Motor neuron (in vitro differentiated cells): ENCODE measurements at regions of chr16 and their contacts with region 1.

Region 1: DNA sequence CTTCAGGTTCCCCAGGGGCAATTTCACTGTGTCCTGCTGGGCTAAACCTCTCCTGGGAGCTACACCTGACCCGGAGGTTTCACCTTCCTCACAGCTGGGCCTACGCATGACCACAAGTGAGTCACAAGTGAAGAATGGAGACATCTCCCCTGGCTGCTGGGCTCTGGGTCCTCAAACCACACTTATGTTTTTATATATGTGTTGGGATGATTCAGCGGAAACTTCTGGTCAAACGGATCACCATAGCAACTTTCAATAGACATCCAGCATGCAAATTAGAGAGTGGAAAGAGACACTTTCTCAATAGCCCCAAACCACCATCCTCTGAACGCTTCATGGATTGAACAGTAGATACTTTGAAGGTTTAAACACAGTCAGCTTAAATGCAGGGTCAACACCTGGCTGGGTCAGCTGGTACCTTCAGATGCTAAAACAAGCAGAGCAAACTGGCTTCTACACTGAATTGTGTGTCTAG is 28.0 kb upstream of the MAF start:
- ATAC-seq: no peak
- H3K4me3 ChIP-seq: no peak overlapping the region
- H3K27ac ChIP-seq: no peak overlapping the region
- H3K4me1 ChIP-seq: no peaks in the 10 kb centered on the region

Region 2: GRCh38 chr16:79792664-79793351 is 164.3 kb after region 1 on chr16:
- in situ Hi-C with region 1: no loop called
- ATAC-seq: no peak
- H3K4me3 ChIP-seq: no peak overlapping the region
- H3K27ac ChIP-seq: no peak overlapping the region
- H3K4me1 ChIP-seq: no peaks in the 10 kb centered on the region

Region 3: DNA sequence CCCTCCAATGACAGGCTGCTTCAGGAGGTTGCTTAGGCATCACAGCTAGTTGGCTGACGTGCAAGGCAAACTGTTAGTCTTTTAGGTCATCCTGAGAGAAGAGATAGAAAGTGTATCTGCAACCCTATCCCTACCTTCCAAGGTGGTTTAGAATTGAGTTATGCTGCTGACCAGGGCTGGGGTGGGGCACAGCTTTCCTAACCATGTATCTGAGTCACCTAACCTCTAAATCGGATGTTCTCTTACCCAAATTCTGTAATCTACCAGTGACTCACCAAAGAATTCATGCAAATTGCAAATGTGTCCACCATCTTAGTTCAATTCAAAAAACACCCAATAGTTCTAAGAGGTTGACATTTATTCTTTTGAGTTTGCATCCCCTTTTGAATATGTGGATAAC is 805.1 kb after region 1 on chr16:
- in situ Hi-C with region 1: no loop called
- ATAC-seq: peak in 3 of 8 experiments; percentile 50 to 99 (median 95)
- H3K4me3 ChIP-seq: no peak overlapping the region
- H3K27ac ChIP-seq: no peak overlapping the region
- H3K4me1 ChIP-seq: no peaks in the 10 kb centered on the region

Region 4: DNA sequence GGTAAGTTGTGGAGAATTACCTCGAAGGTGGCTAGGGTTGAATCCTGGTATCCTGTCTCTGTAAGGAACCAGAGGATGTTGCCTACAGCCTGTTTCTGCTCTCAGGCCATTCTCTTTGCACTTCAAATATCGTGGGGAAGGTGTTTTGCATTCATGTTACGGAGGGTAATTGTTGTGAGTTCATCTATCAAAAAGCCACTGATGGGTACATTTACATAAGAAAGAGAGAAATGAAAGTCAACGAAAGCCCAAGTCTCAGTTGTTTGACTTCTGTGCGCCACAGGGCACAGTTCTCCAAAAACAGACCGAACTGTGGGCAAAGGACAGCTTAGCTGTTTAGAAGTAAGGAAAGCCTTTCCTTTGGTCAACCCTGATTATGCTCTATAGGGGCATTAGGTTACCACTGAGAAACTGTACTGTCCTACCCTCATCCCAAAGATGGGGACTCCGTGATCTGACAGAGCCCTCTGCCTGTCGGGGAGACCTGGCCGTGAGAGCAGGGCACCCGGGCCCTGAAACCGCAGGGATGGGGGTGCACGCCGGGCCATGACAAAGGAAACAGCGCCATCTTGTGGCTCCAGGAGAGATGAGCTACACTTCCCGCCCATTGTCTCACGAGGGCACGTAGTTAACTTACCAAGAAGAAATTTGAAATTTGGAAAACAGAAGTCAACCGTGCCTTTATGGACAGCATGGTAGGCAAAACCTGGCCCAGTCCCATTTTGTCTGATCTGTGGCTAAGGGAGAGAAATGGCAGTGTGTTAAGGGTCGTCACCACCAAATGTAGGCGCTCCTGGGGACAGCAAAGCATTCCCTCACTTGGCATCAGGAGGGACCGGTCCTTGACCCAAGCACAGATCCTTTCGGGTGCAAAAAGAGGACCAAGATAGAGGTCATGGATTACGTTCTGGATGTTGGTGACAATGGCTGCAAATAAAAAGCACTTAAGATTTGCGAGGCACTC is 837.8 kb after region 1 on chr16:
- in situ Hi-C with region 1: loop called in 1 of 9 experiments (anchors 25 kb)
- ATAC-seq: peak; percentile 86 to 100 (median 96)
- H3K4me3 ChIP-seq: no peak overlapping the region
- H3K27ac ChIP-seq: no peak overlapping the region
- H3K4me1 ChIP-seq: peaks cover 0 to 3% of the 10 kb centered on the region in 2 donors